Natural killer cell (primary cell): ENCODE measurements at regions of chr16 and their contacts with region 1.

Region 1: DNA sequence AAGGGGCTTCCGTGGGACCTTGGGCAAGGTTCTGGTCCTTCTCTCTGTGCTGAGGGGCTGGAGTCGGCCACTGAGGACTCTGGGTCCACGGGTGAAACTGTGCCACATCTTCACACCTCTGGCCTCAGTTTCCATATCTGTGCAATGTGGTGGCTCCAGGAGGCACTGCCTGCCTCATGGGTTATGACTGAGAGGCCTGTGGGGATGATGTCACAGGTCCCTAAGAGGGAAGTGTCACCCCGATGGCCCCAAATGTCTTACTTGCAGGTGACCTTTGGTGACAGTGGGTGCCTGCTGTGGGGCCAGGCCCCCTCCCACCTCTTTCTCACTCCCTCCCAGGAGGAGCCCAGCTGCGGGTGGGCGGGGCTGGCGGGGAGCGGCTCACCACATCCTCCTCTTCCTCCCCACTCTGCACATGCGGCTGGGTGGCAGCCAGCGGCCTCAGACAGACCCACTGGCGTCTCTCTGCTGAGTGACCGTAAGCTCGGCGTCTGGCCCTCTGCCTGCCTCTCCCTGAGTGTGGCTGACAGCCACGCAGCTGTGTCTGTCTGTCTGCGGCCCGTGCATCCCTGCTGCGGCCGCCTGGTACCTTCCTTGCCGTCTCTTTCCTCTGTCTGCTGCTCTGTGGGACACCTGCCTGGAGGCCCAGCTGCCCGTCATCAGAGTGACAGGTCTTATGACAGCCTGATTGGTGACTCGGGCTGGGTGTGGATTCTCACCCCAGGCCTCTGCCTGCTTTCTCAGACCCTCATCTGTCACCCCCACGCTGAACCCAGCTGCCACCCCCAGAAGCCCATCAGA is at the start of gene IL21R:
- DNase-seq: peak; percentile 85 to 92
- ATAC-seq: peak; percentile 77 to 92 (median 89)
- H3K4me3 ChIP-seq: peak within 1 kb of the TSS; percentile 72
- H3K4me3 Mint-ChIP-seq: peak within 1 kb of the TSS; percentile 98
- H3K27ac ChIP-seq: peak within 1 kb of the TSS; percentile 92
- H3K27ac Mint-ChIP-seq: peak within 1 kb of the TSS; percentile 98 to 99
- H3K4me1 ChIP-seq: peaks cover 89% of the 10 kb centered on the region
- H3K4me1 Mint-ChIP-seq: peaks cover 74 to 82% of the 10 kb centered on the region in 2 donors
- H3K27me3 ChIP-seq: no peaks in the 10 kb centered on the region
- H3K27me3 Mint-ChIP-seq: no peaks in the 10 kb centered on the region
- CTCF ChIP-seq: no peak
- total RNA-seq, gene IL21R: 24.3 to 45.7 (median 26.5) TPM

Region 2: GRCh38 chr16:27355610-27356009 is 46.4 kb before region 1 on chr16:
- intact Hi-C with region 1: no loop called
- DNase-seq: peak in 1 of 2 donors; percentile 68
- ATAC-seq: peak; percentile 50 to 58 (median 50)
- H3K4me3 ChIP-seq: no peak overlapping the region
- H3K4me3 Mint-ChIP-seq: no peak overlapping the region
- H3K27ac ChIP-seq: no peak overlapping the region
- H3K27ac Mint-ChIP-seq: peak overlapping the region in 1 of 2 donors; percentile 51
- H3K4me1 ChIP-seq: no peaks in the 10 kb centered on the region
- H3K4me1 Mint-ChIP-seq: peaks cover 7 to 14% of the 10 kb centered on the region in 2 donors
- H3K27me3 ChIP-seq: no peaks in the 10 kb centered on the region
- H3K27me3 Mint-ChIP-seq: no peaks in the 10 kb centered on the region
- CTCF ChIP-seq: no peak

Region 3: DNA sequence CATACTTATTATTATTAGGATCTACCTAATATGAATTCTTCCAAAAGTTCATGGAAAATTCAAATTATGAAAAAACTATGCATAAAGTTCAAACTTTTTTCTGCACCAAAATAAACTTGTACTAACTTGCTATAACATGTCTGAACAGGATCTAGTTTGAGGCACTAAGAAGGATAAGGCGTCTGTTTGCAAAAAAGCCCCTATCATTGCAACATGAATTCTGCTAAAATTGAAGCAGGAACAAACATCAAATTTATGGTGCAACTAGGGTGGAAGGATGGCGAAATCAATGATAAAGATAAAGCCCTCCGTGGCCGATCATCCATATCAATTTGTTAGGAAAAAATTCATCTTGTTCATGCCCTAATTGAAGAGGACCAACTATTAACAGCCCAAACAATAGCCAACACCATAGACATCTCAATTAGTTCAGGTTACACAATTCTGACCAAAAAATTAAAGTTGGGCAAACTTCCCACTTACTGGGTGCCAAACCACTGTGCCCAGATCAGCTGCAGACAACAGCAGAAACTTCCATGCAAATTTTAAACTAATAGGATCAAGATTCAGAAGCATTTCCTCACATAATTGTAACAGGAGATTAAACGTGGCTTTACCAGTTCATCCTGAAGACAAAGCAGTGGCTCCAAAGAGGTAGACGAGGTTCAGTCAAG is 12.9 kb after region 1 on chr16:
- intact Hi-C with region 1: no loop called
- DNase-seq: no peak
- ATAC-seq: no peak
- H3K4me3 ChIP-seq: no peak overlapping the region
- H3K4me3 Mint-ChIP-seq: peak overlapping the region; percentile 17
- H3K27ac ChIP-seq: no peak overlapping the region
- H3K27ac Mint-ChIP-seq: peak overlapping the region; percentile 35 to 82
- H3K4me1 ChIP-seq: peaks cover 8% of the 10 kb centered on the region
- H3K4me1 Mint-ChIP-seq: peaks cover 55 to 58% of the 10 kb centered on the region in 2 donors
- H3K27me3 ChIP-seq: no peaks in the 10 kb centered on the region
- H3K27me3 Mint-ChIP-seq: no peaks in the 10 kb centered on the region
- CTCF ChIP-seq: no peak

Region 4: DNA sequence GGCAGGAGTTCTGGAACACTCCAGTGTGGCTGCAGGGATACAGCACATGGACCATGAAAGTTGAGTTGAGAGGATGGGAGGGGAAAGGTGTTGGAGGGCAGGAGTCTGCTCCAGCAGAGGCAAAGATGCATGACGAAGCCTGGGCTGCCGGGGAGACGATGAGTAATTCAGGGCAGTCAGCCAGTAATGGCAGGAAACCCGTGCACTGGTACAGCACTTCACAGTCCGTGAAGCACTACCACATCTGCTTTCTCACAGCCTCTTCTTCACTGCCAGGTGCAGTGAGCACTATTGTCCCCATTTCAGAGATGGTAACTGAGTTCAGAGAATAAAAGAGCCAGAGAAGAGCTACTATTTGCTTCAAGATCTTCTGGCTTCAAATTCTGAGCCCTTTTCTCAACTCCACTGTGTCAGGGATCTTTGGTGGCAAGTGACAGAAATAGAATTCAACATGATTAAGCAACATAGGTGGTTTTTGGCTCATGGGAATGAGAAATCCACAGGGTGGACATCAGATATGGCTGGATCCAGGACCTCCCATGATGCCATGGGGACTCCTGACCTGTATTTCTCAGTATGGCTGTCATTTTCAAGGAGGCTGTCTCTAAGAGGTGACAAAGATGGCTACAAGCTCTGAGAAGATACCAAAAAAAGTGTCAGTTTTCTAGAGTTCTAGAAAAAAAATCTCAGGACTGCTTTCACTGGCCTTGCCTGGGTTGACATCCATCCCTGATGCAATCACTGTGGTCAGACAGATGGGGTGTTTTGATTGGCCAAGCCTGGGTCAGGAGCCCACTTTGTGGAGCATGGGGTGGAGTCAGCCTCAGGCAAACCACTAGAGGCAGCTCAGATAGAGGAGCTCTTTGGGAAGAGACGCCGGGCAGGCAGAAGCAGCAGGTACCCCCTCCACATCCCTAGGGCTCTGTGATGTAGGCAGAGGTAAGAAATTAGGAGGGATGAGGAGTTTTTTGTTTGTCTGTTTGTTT is 24.7 kb after region 1 on chr16:
- intact Hi-C with region 1: loop called (anchors 1 kb)
- DNase-seq: peak; percentile 67 to 84
- ATAC-seq: peak; percentile 92 to 95 (median 94)
- H3K4me3 ChIP-seq: no peak overlapping the region
- H3K4me3 Mint-ChIP-seq: peak overlapping the region; percentile 63
- H3K27ac ChIP-seq: peak overlapping the region; percentile 80
- H3K27ac Mint-ChIP-seq: peak overlapping the region; percentile 91 to 93
- H3K4me1 ChIP-seq: peaks cover 56% of the 10 kb centered on the region
- H3K4me1 Mint-ChIP-seq: peaks cover 30 to 35% of the 10 kb centered on the region in 2 donors
- H3K27me3 ChIP-seq: no peaks in the 10 kb centered on the region
- H3K27me3 Mint-ChIP-seq: no peaks in the 10 kb centered on the region
- CTCF ChIP-seq: no peak

Region 5: GRCh38 chr16:27721531-27722181 is 319.7 kb after region 1 on chr16:
- intact Hi-C with region 1: no loop called
- DNase-seq: no peak
- ATAC-seq: peak in 1 of 3 donors; percentile 8
- H3K4me3 ChIP-seq: no peak overlapping the region
- H3K4me3 Mint-ChIP-seq: peak overlapping the region; percentile 67
- H3K27ac ChIP-seq: no peak overlapping the region
- H3K27ac Mint-ChIP-seq: peak overlapping the region; percentile 14 to 74
- H3K4me1 ChIP-seq: peaks cover 36% of the 10 kb centered on the region
- H3K4me1 Mint-ChIP-seq: peaks cover 24 to 39% of the 10 kb centered on the region in 2 donors
- H3K27me3 ChIP-seq: no peaks in the 10 kb centered on the region
- H3K27me3 Mint-ChIP-seq: no peaks in the 10 kb centered on the region
- CTCF ChIP-seq: no peak